Naive thymus-derived CD8-positive, alpha-beta T cell (primary cell): ENCODE measurements at regions of chr17 and their contacts with region 1.

Region 1: DNA sequence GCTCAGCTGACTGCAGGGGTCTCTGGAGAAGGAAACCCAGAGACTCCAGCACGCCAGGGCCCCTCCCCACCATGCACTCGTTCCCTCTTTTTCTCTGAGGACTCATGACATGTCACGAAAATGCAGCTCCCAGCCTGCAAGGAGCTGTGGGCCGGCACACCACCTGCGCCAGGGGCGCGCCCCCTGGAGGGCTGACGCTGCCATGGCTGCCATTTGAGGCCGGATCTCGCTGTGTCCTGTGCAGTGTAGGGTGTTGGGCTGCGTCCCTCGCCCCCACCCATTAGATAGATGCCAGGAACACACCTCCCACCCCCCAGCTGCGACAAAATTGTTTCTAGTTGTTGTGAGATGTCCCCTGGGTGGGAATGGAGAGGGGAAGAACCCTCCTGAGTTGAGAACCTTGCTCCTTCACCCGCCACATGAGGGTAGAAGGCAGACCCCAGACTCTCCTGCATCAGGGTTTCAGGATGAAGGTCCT is 8.2 kb downstream of the SYNGR2 start:
- DNase-seq: peak; percentile 60 to 85 (median 74)
- ATAC-seq: peak; percentile 85 to 93
- H3K4me3 Mint-ChIP-seq: peak overlapping the region in 1 of 10 donors; percentile 19
- H3K27ac Mint-ChIP-seq: peak overlapping the region in 1 of 10 donors; percentile 27
- H3K4me1 Mint-ChIP-seq: peaks cover 30 to 65% (median 48%) of the 10 kb centered on the region in 4 donors
- H3K27me3 Mint-ChIP-seq: no peaks in the 10 kb centered on the region

Region 2: DNA sequence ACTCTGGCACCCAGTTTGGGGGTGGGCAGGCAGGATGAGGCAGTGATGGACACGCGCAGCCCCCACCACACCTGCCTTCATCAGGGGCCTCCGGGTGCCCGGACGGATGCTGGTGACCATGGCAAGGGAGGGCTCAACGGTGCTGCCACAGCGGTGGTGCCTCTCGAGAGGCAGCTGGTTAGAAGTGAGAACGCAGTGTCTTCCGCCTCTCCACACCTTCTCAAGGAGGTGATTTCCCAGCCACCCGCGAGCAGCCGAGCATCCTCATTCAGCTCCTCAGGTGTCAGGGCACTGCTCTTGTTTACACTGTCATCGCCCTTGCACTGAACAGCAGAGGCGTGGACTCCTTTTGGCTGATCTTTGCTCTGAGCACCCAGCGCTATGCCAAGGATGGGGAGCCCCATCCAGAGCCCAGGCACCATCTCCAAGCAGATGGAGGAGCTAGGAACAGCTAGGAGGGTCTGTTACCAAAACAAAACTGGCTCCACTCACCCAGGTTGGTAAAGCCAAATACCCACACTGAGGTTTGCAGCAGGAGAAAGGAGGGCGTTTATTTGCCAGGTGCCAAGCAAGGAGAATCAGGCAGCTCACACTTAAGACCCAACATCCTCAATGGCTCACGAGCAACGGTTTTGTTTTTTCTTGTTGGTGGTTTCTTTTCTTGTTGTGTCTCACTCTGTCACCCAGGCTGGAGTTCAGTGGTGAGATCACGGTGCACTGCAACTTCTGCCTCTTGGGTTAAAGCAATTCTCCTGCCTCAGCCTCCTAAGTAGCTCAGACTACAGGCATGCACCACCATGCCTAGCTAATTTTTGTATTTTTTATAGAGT is 392.4 kb before region 1 on chr17:
- POLR2A ChIA-PET with region 1: no interaction called
- DNase-seq: peak; percentile 20 to 76 (median 56)
- ATAC-seq: peak; percentile 96 to 97
- H3K4me3 Mint-ChIP-seq: peak overlapping the region in 9 of 10 donors; percentile 38 to 66 (median 52)
- H3K27ac Mint-ChIP-seq: peak overlapping the region; percentile 83 to 98 (median 90)
- H3K4me1 Mint-ChIP-seq: peaks cover 6 to 20% (median 11%) of the 10 kb centered on the region in 4 donors
- H3K27me3 Mint-ChIP-seq: peaks cover 0 to 3% (median 0%) of the 10 kb centered on the region in 5 donors

Region 3: DNA sequence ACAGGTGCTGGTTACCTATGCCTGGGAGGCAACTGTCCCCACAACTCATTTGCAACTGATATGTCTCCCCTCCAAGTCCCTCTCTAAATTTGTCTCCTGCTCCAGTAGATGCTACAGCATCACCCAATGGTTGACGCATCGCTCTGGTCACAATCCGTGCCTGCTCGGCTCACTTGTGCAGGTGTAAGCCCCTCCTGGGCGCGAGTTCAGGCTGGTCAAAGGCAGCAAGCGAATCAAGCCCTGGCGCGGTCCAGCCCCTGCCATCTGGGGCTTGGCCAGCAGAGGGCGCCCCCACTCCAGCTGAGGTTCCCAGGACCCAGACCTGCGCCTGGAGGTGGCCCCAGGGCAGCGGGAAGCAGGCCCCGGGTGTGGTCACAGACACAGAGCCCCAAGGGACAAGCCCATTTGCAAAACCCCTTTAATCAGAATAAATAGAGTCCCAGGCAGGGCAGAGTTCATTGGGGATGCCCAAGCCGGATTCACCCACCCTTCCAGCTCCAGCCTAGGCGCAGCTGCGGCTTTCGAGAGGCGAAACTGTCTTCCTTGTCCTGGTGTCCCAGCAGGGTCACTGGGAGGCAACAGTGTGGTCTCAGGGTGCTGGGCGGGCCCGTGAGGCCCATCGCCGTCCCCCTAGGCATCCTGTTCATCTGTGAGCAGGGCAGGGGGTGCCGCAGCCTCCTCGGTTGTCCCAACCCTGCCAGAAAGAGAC is 63.9 kb before region 1 on chr17:
- POLR2A ChIA-PET with region 1: interaction called, 40 read pairs
- DNase-seq: peak; percentile 51 to 86 (median 77)
- ATAC-seq: peak; percentile 62 to 67
- H3K4me3 Mint-ChIP-seq: peak overlapping the region in 8 of 10 donors; percentile 49 to 82 (median 64)
- H3K27ac Mint-ChIP-seq: peak overlapping the region; percentile 67 to 99 (median 92)
- H3K4me1 Mint-ChIP-seq: peaks cover 33 to 64% (median 52%) of the 10 kb centered on the region in 4 donors
- H3K27me3 Mint-ChIP-seq: no peaks in the 10 kb centered on the region

Region 4: DNA sequence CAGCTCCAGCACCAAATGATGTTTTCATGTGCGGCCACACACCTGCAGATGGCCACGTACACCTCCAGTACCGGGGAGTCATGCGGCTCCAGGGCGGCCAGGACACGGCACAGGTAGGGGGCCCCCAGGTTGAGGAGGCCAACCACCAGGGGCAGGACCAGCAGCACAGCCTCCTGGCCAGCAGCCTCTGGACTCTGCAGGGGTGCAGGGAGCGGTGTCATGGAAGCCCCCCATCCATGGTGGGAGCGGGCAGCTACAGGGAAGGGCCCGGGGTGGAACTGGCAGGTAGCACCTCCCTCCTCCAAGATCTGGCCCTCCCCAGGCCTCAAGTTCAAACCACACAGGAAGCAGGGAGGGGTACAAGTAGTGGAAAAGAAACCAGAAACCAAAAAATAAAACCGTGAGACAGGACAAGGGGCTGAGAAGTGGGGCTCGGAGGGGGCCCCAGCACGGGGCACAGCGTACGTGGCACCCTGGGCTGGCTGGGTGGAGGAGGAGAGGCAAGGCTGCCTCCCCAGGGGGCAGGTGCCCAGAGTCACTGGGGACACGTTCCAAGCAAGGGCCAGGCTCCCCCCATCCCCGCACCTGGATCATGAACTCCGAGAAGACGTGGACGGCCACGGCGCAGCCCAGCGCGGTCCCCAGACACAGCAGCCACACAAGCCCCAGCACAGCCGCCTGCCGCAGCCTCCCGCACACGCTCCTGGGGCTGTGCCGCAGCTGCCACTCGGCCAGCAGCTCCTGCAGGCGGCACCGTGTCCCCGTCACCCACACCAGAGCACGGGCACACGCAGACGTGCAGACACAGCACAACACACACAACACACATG is 55.4 kb before region 1 on chr17:
- POLR2A ChIA-PET with region 1: interaction called, 122 read pairs
- DNase-seq: peak in 9 of 10 donors; percentile 37 to 86 (median 67)
- ATAC-seq: peak; percentile 55 to 67
- H3K4me3 Mint-ChIP-seq: peak overlapping the region; percentile 78 to 100 (median 86)
- H3K27ac Mint-ChIP-seq: peak overlapping the region; percentile 86 to 96 (median 90)
- H3K4me1 Mint-ChIP-seq: peaks cover 38 to 84% (median 74%) of the 10 kb centered on the region in 4 donors
- H3K27me3 Mint-ChIP-seq: no peaks in the 10 kb centered on the region

Region 5: GRCh38 chr17:78133971-78134898 is 42.4 kb before region 1 on chr17:
- POLR2A ChIA-PET with region 1: interaction called, 122 read pairs
- DNase-seq: peak; percentile 64 to 93 (median 80)
- ATAC-seq: peak; percentile 19 to 27
- H3K4me3 Mint-ChIP-seq: peak overlapping the region; percentile 75 to 100 (median 90)
- H3K27ac Mint-ChIP-seq: peak overlapping the region; percentile 87 to 97 (median 90)
- H3K4me1 Mint-ChIP-seq: peaks cover 49 to 86% (median 79%) of the 10 kb centered on the region in 4 donors
- H3K27me3 Mint-ChIP-seq: no peaks in the 10 kb centered on the region

Region 6: GRCh38 chr17:78140169-78140976 is 36.2 kb before region 1 on chr17:
- POLR2A ChIA-PET with region 1: interaction called, 43 read pairs
- DNase-seq: peak; percentile 83 to 97 (median 94)
- ATAC-seq: peak; percentile 81 to 89
- H3K4me3 Mint-ChIP-seq: peak overlapping the region; percentile 47 to 78 (median 68)
- H3K27ac Mint-ChIP-seq: peak overlapping the region; percentile 79 to 97 (median 93)
- H3K4me1 Mint-ChIP-seq: peaks cover 41 to 88% (median 81%) of the 10 kb centered on the region in 4 donors
- H3K27me3 Mint-ChIP-seq: no peaks in the 10 kb centered on the region